ENCODE measurements at regions of chr3 and their contacts with region 1.

Region 1: DNA sequence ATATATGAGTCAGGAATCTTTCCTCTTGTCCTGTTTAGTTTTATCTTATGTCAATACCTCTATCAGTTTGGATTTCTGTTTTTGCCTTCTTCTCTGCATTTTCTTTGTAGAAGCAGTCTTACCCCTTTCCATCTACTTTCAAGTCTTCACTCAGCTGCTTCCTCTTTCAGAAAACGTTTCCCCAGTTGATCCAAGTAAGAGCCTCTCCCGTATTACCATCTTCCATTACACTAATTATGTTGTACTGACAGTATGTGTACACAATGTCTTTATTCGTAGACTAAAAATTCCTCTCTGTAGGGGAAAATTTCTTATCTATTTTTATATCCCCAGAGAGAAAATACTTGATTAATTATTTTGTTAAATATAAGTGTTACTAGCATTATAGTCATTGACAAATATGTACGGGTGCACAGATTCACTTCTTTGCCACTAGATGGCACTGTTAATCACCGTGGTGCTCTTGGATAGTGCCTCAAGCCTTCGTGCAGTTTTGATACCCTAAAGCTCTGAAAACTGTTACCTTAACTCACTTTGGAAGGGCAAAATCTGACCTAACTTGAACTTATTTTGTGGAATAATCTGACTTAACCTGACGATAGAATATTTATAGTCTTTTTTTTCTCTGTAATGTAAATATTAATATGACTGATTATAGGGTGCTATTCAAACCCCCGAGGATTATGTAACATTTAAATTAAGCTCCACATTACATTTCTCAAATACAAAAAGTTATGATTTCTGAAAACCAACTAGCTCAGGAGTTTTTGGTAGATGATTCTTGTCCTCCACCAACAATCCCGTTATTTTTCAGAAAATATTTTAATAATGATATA is 74.2 kb upstream of the POU1F1 start:
- DNase-seq: no peak
- H3K4me3 ChIP-seq: no peak overlapping the region
- H3K27ac ChIP-seq: no peak overlapping the region
- H3K4me1 ChIP-seq: no peaks in the 10 kb centered on the region
- H3K27me3 ChIP-seq: no peaks in the 10 kb centered on the region
- CTCF ChIP-seq: peak in 2 of 3 experiments; percentile 69 to 70; a peak in 3 of 4 replicates
- EP300 ChIP-seq: no peak
- POLR2A ChIP-seq: no peak
- RAD21 ChIP-seq: peak; percentile 80 to 81

Region 2: DNA sequence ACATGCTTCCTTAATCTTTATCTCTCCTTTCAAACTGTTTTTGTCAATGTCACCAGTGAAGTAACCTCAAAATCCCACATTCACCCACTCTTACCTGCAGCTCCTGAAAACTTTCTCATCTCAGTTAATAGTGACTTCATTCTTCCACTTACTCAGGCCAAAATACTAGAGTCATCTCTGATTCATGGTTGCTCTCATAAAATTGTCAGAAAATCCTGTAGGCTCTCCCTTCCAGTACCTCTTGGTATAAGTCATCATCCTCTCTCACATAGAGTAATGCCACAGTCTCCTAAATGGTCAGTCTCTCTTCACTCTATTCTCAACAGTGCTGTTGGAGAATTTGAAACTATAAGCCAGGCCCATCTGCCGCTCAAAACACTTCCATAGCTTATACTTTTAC is 39.3 kb before region 1 on chr3:
- CTCF ChIA-PET with region 1: interaction called, 12 read pairs
- POLR2A ChIA-PET with region 1: no interaction called
- DNase-seq: no peak
- H3K4me3 ChIP-seq: no peak overlapping the region
- H3K27ac ChIP-seq: no peak overlapping the region
- H3K4me1 ChIP-seq: peaks cover 0 to 5% (median 1%) of the 10 kb centered on the region in 4 experiments; a peak in 2 of 7 replicates
- H3K27me3 ChIP-seq: no peaks in the 10 kb centered on the region
- CTCF ChIP-seq: no peak
- EP300 ChIP-seq: no peak
- POLR2A ChIP-seq: no peak
- RAD21 ChIP-seq: no peak

Region 3: DNA sequence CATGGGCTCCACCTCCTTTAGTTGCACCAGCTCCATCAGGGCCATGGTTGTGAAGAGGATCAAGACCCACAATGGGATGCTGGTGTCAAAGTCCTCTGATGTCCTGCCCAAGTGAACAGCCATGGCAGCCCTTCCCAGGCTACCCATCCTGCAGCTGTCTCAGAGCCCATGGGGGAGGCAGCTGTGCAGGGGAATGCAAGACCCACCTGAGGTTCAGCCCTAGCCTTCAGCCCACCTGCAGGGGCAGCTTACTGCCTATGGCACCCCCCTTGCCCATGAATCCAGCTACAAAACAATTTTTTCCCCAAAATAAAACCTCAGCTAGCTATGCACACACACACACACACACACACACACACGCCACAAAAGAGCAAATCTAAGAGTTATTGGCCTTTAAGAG is 26.0 kb before region 1 on chr3:
- CTCF ChIA-PET with region 1: interaction called, 11 read pairs
- POLR2A ChIA-PET with region 1: no interaction called
- DNase-seq: no peak
- H3K4me3 ChIP-seq: no peak overlapping the region
- H3K27ac ChIP-seq: no peak overlapping the region
- H3K4me1 ChIP-seq: no peaks in the 10 kb centered on the region
- H3K27me3 ChIP-seq: no peaks in the 10 kb centered on the region
- CTCF ChIP-seq: no peak
- EP300 ChIP-seq: no peak
- POLR2A ChIP-seq: no peak
- RAD21 ChIP-seq: no peak

Region 4: DNA sequence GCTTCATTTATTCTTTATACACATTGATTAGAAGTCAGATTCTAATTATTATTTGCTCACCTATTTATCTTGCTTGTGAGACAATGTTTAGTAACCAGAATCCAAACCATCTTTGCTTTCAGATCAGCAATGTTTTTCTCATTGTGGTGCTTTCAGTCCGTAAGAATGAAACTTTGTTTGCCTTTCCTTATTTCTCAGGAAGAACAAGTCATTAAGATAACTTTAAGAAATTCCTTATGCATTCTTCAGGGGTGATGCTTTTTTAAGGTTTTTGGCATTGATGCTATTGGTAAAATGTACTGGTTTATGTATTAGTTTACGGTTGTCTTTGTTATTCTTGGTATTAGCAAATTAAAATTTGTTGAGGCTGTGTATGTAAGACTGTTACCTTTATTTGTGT is 46.6 kb after region 1 on chr3:
- CTCF ChIA-PET with region 1: no interaction called
- POLR2A ChIA-PET with region 1: no interaction called
- DNase-seq: no peak
- H3K4me3 ChIP-seq: no peak overlapping the region
- H3K27ac ChIP-seq: no peak overlapping the region
- H3K4me1 ChIP-seq: no peaks in the 10 kb centered on the region
- H3K27me3 ChIP-seq: no peaks in the 10 kb centered on the region
- CTCF ChIP-seq: no peak
- EP300 ChIP-seq: no peak
- POLR2A ChIP-seq: no peak
- RAD21 ChIP-seq: no peak

Region 5: GRCh38 chr3:87503900-87504508 is 153.4 kb after region 1 on chr3:
- CTCF ChIA-PET with region 1: interaction called, 14 read pairs
- POLR2A ChIA-PET with region 1: no interaction called
- DNase-seq: peak in 1 of 2 experiments; percentile 2
- H3K4me3 ChIP-seq: no peak overlapping the region
- H3K27ac ChIP-seq: no peak overlapping the region
- H3K4me1 ChIP-seq: no peaks in the 10 kb centered on the region
- H3K27me3 ChIP-seq: no peaks in the 10 kb centered on the region
- CTCF ChIP-seq: peak in 2 of 3 experiments; percentile 67 to 74; a peak in 3 of 4 replicates
- EP300 ChIP-seq: no peak
- POLR2A ChIP-seq: no peak
- RAD21 ChIP-seq: peak; percentile 85 to 86

Region 6: GRCh38 chr3:87541723-87542122 is 191.1 kb after region 1 on chr3:
- CTCF ChIA-PET with region 1: no interaction called
- POLR2A ChIA-PET with region 1: no interaction called
- DNase-seq: no peak
- H3K4me3 ChIP-seq: no peak overlapping the region
- H3K27ac ChIP-seq: no peak overlapping the region
- H3K4me1 ChIP-seq: no peaks in the 10 kb centered on the region
- H3K27me3 ChIP-seq: no peaks in the 10 kb centered on the region
- CTCF ChIP-seq: no peak
- EP300 ChIP-seq: no peak
- POLR2A ChIP-seq: no peak
- RAD21 ChIP-seq: no peak

Region 7: GRCh38 chr3:87615506-87615905 is 264.9 kb after region 1 on chr3:
- CTCF ChIA-PET with region 1: interaction called, 11 read pairs
- POLR2A ChIA-PET with region 1: no interaction called
- DNase-seq: no peak
- H3K4me3 ChIP-seq: no peak overlapping the region
- H3K27ac ChIP-seq: no peak overlapping the region
- H3K4me1 ChIP-seq: peaks cover 0 to 6% (median 2%) of the 10 kb centered on the region in 4 experiments; a peak in 3 of 7 replicates
- H3K27me3 ChIP-seq: no peaks in the 10 kb centered on the region
- CTCF ChIP-seq: no peak
- EP300 ChIP-seq: no peak
- POLR2A ChIP-seq: no peak
- RAD21 ChIP-seq: no peak